ENCODE measurements at regions of chr9 and their contacts with region 1.

Region 1: DNA sequence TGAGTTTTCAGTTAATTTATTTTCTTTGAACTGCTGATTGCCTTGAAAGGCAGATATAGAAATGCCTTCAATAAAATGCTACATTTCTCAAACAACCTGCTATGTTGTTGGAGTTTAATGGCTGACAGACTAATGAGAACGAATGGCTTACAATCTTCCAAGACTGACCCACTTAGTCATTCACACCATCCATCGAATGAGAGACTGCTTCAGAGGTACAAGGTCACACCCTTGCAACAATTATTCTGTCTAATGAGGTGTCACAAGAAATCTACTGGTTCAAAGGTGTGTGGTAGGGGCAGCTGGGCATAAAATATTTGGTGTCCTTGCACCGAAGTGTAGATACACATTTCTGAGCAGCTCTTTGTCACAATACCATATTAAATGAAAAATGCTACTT is 18.3 kb downstream of the PTPRD start:
- DNase-seq: no peak
- H3K4me3 ChIP-seq: no peak overlapping the region
- H3K27ac ChIP-seq: no peak overlapping the region
- H3K4me1 ChIP-seq: no peaks in the 10 kb centered on the region
- H3K27me3 ChIP-seq: no peaks in the 10 kb centered on the region
- CTCF ChIP-seq: no peak
- EP300 ChIP-seq: no peak
- POLR2A ChIP-seq: no peak

Region 2: GRCh38 chr9:10479172-10479571 is 115.3 kb before region 1 on chr9:
- in situ Hi-C with region 1: loop called in 1 of 4 experiments (anchors 25 kb)
- intact Hi-C with region 1: no loop called
- DNase-seq: no peak
- H3K4me3 ChIP-seq: no peak overlapping the region
- H3K27ac ChIP-seq: no peak overlapping the region
- H3K4me1 ChIP-seq: no peaks in the 10 kb centered on the region
- H3K27me3 ChIP-seq: no peaks in the 10 kb centered on the region
- CTCF ChIP-seq: no peak
- EP300 ChIP-seq: no peak
- POLR2A ChIP-seq: no peak

Region 3: GRCh38 chr9:10704720-10705119 is 110.2 kb after region 1 on chr9:
- in situ Hi-C with region 1: no loop called
- intact Hi-C with region 1: no loop called
- DNase-seq: no peak
- H3K4me3 ChIP-seq: no peak overlapping the region
- H3K27ac ChIP-seq: no peak overlapping the region
- H3K4me1 ChIP-seq: no peaks in the 10 kb centered on the region
- H3K27me3 ChIP-seq: no peaks in the 10 kb centered on the region
- CTCF ChIP-seq: no peak
- EP300 ChIP-seq: no peak
- POLR2A ChIP-seq: no peak

Measured in transverse colon (tissue), 4 donors.